MCF 10A (cell line): ENCODE measurements at regions of chr20 and their contacts with region 1.

Region 1: DNA sequence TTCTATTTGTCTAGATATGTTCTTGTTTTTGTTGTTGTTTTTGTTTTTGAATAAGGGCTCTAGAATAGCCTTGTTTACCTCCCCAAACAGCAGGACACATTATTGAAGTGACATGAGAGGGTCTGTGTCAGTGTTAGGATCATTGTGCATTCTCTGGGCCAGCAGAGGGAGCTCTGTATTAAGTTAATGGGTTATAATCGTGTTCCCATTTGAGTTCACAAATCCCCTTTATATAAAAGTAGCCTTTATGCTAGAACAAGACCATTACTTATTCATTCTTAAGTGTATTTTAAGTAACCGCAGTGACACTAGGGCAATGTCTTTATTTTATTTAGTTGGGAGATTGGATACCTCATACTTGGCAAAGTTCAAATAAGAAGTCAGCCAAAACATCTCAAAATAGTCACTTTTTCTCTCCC is 44.8 kb downstream of the STK4 start:
- DNase-seq: peak; percentile 75
- H3K4me3 Mint-ChIP-seq: no peak overlapping the region
- H3K27ac Mint-ChIP-seq: peak overlapping the region; percentile 6
- H3K4me1 Mint-ChIP-seq: peaks cover 22% of the 10 kb centered on the region
- H3K27me3 Mint-ChIP-seq: no peaks in the 10 kb centered on the region
- CTCF ChIP-seq: peak; percentile 63

Region 2: GRCh38 chr20:44176833-44177534 is 834.1 kb before region 1 on chr20:
- CTCF ChIA-PET with region 1: no interaction called
- POLR2A ChIA-PET with region 1: no interaction called
- intact Hi-C with region 1: no loop called
- DNase-seq: peak; percentile 66
- H3K4me3 Mint-ChIP-seq: peak overlapping the region; percentile 29
- H3K27ac Mint-ChIP-seq: peak overlapping the region; percentile 92
- H3K4me1 Mint-ChIP-seq: peaks cover 28% of the 10 kb centered on the region
- H3K27me3 Mint-ChIP-seq: no peaks in the 10 kb centered on the region
- CTCF ChIP-seq: no peak

Region 3: DNA sequence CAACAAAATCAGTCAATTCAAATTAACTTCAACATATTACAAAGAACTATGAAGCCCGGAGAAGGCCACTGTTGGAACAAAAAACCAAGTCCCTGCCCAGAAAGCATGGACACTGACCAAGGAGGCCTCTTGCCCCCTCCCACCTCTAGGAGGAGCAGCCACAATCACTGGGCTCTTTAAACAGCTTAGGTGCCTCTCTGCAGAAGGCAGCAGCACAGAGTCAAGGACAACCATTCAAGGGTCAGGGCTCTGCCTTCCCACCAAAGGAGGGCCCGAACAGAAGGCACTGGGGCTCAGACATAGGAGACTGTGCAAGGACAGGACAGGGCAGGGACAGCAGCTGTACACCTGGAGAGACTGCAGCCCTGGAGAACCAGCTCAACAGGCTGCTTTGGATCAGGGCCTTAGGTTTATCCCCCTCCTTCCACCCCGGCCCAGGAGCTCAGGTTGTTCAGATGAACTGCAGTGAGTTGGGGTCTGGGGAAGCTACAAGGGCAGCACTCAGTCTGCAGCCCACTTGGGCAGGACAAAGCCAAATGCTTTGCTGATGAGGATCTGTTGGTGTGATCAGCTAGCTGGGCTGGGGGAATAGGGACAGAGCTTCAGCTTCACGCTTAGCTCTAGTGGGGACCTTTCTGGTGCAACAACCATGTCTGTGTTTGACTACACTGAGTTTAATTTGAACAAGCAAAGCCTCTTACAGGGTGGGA is 68.7 kb before region 1 on chr20:
- CTCF ChIA-PET with region 1: no interaction called
- POLR2A ChIA-PET with region 1: no interaction called
- intact Hi-C with region 1: no loop called
- DNase-seq: no peak
- H3K4me3 Mint-ChIP-seq: no peak overlapping the region
- H3K27ac Mint-ChIP-seq: no peak overlapping the region
- H3K4me1 Mint-ChIP-seq: no peaks in the 10 kb centered on the region
- H3K27me3 Mint-ChIP-seq: no peaks in the 10 kb centered on the region
- CTCF ChIP-seq: no peak

Region 4: DNA sequence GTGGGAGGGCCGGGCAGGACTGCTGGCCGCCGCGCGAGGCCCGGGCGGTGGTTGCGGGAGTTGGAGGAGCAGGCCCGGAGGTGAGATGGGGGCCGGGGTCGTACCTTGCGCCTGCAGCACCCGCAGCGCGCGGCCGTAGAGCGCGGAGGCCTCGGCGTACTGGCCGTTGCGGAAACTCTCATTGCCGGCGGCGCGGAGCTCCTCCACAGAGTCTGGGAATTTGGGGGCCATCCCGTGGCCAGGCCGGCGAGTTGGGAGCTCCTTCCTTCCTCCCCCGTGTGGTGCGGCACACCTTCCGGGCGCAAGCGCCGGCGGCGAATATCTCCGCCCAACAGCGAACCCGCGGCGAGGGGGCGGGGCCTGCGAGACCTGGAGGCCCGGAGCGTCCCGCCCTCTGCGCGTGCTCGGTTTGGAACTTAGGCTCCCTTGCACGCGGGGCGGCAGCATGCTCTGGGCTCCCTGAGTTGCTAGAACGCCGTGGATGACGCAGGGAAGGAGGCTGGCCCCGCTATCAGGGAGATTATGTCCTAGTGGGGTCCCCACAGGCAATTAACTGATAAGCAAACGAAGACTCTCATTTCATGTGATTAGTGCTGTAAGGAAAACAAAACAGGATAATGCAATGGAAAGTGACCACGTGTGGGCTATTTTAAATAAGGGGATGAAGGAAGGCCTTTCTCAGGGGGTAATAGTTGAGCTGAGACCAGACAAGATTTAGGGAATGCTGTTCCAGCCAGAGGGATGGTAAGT is 50.8 kb before region 1 on chr20 and contains the start of gene TOMM34:
- CTCF ChIA-PET with region 1: interaction called, 15 read pairs
- POLR2A ChIA-PET with region 1: interaction called, 4 read pairs
- intact Hi-C with region 1: no loop called
- DNase-seq: peak; percentile 94
- H3K4me3 Mint-ChIP-seq: peak within 1 kb of the TSS; percentile 76
- H3K27ac Mint-ChIP-seq: peak within 1 kb of the TSS; percentile 43
- H3K4me1 Mint-ChIP-seq: peaks cover 45% of the 10 kb centered on the region
- H3K27me3 Mint-ChIP-seq: no peaks in the 10 kb centered on the region
- CTCF ChIP-seq: no peak
- total RNA-seq, gene TOMM34: 55.5 and 60.0 TPM in 2 replicates

Region 5: GRCh38 chr20:44997171-44998067 is 13.7 kb before region 1 on chr20:
- CTCF ChIA-PET with region 1: interaction called, 49 read pairs
- POLR2A ChIA-PET with region 1: interaction called, 7 read pairs
- intact Hi-C with region 1: no loop called
- DNase-seq: no peak
- H3K4me3 Mint-ChIP-seq: no peak overlapping the region
- H3K27ac Mint-ChIP-seq: no peak overlapping the region
- H3K4me1 Mint-ChIP-seq: peaks cover 5% of the 10 kb centered on the region
- H3K27me3 Mint-ChIP-seq: no peaks in the 10 kb centered on the region
- CTCF ChIP-seq: no peak

Region 6: DNA sequence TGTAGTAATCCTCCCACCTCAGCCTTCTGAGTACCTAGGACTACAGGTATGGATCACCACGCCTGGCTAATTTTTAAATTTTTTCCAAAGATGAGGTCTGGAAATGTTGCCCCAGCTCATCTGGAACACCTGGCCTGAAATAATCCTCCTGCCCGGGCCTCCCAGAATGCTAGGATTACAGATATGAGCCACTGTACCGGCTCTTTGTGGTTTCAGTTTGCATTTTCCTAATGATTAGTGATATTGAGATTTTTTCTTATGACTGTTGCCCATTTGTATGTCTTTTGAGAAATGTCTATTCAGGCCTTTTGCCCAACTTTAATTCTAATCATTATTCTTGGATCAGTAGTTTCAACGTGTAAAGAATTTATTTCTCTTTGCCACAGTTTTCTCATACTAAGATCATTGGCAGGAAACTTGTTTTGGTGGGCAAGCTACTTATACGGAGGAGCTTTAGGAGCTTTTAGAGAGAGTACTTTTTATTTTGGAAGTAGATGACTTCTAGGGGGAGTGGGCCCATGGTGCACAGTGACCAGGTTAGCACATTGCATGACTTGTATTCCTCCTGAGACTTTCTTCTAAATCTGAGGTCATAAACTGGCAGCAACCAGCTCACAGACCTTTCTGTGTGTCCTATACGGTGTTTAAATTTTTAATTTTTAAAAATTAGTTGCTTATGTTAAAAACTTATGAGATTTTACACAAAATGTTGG is 17.5 kb after region 1 on chr20:
- CTCF ChIA-PET with region 1: interaction called, 18 read pairs
- POLR2A ChIA-PET with region 1: interaction called, 6 read pairs
- intact Hi-C with region 1: no loop called
- DNase-seq: no peak
- H3K4me3 Mint-ChIP-seq: no peak overlapping the region
- H3K27ac Mint-ChIP-seq: no peak overlapping the region
- H3K4me1 Mint-ChIP-seq: peaks cover 10% of the 10 kb centered on the region
- H3K27me3 Mint-ChIP-seq: no peaks in the 10 kb centered on the region
- CTCF ChIP-seq: no peak

Region 7: GRCh38 chr20:45036044-45036755 is 25.1 kb after region 1 on chr20:
- CTCF ChIA-PET with region 1: interaction called, 55 read pairs
- POLR2A ChIA-PET with region 1: interaction called, 80 read pairs
- intact Hi-C with region 1: no loop called
- DNase-seq: peak; percentile 85
- H3K4me3 Mint-ChIP-seq: peak overlapping the region; percentile 60
- H3K27ac Mint-ChIP-seq: peak overlapping the region; percentile 95
- H3K4me1 Mint-ChIP-seq: peaks cover 57% of the 10 kb centered on the region
- H3K27me3 Mint-ChIP-seq: no peaks in the 10 kb centered on the region
- CTCF ChIP-seq: no peak

Region 8: GRCh38 chr20:45111799-45112471 is 100.8 kb after region 1 on chr20:
- CTCF ChIA-PET with region 1: interaction called, 42 read pairs
- POLR2A ChIA-PET with region 1: no interaction called
- intact Hi-C with region 1: loop called (anchors 1 kb)
- DNase-seq: peak; percentile 50
- H3K4me3 Mint-ChIP-seq: no peak overlapping the region
- H3K27ac Mint-ChIP-seq: no peak overlapping the region
- H3K4me1 Mint-ChIP-seq: no peaks in the 10 kb centered on the region
- H3K27me3 Mint-ChIP-seq: peaks cover 10% of the 10 kb centered on the region
- CTCF ChIP-seq: peak; percentile 64

Region 9: GRCh38 chr20:45311589-45312211 is 300.6 kb after region 1 on chr20:
- CTCF ChIA-PET with region 1: interaction called, 9 read pairs
- POLR2A ChIA-PET with region 1: no interaction called
- intact Hi-C with region 1: loop called (anchors 1 kb)
- DNase-seq: peak; percentile 55
- H3K4me3 Mint-ChIP-seq: no peak overlapping the region
- H3K27ac Mint-ChIP-seq: no peak overlapping the region
- H3K4me1 Mint-ChIP-seq: no peaks in the 10 kb centered on the region
- H3K27me3 Mint-ChIP-seq: no peaks in the 10 kb centered on the region
- CTCF ChIP-seq: peak; percentile 80